ENCODE measurements at regions of chr17 and their contacts with region 1.

Region 1: DNA sequence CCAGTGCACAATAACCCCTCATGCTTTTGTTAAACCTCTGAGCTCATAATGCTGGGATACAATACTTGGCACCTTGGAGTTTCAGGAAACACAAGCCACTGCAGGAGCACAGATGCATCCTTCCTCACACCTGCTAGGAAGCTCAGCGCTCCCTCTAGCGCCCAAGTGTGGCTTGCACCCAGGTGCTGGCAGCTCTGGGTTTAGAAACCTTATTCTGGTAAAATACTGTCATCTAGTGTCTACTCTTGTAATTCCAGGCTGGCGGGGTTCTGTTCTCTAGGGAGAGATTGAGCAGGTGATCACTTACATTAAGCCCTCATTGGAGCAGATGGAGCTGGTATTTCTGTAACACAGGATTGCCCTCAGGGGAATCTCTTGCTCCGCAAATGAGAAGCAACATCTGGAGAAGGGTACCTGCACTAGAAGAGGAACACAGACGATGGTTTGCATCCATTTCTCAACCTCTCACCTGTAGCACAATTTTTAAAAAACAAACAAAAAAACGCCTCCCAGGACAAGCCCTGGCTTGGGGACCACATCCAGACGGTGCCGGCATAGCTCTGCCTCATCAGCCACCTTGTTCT is 1.5 kb downstream of the CCL1 start:
- DNase-seq: peak; percentile 82 to 94 (median 89)
- H3K4me3 ChIP-seq: no peak overlapping the region
- H3K4me3 Mint-ChIP-seq: no peak overlapping the region
- H3K27ac ChIP-seq: no peak overlapping the region
- H3K27ac Mint-ChIP-seq: peak overlapping the region in 1 of 7 donors; percentile 3
- H3K4me1 ChIP-seq: peaks cover 20 to 33% of the 10 kb centered on the region in 2 donors
- H3K4me1 Mint-ChIP-seq: peaks cover 24% of the 10 kb centered on the region
- H3K27me3 ChIP-seq: no peaks in the 10 kb centered on the region
- H3K27me3 Mint-ChIP-seq: peaks cover 0 to 2% (median 2%) of the 10 kb centered on the region in 3 donors
- CTCF ChIP-seq: peak; percentile 100

Region 2: DNA sequence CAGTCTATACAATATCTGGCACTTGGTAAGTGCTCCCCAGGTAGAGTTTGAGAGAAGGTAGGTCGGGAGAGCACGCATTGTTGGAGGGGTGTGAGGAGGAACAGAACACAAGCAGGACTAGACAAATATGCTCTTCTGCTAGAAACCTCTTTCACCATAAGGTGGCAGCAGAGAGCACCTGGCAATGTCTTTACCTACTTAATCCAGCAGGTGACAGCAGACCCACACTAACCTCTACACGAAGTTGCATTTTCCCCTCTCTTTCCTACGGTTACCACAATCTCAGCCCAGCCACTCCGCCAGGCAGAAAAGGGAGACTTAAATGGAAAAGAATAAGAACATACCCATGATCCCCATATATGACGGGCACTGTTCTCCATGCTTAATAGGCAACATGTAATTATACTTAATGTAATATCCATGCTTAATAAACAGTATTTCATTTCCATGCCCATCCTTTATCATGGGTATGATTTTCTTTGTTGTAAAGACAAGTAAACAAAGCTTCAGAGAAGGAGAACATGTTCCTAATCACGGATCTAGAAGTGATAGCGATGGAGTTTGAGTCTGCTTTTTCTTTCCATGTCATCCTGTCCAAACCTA is 161.5 kb before region 1 on chr17:
- intact Hi-C with region 1: loop called (anchors 1 kb)
- DNase-seq: peak; percentile 79 to 88 (median 87)
- H3K4me3 ChIP-seq: no peak overlapping the region
- H3K4me3 Mint-ChIP-seq: no peak overlapping the region
- H3K27ac ChIP-seq: peak overlapping the region in 1 of 2 donors; percentile 3
- H3K27ac Mint-ChIP-seq: peak overlapping the region in 4 of 7 donors; percentile 12 to 59 (median 36)
- H3K4me1 ChIP-seq: peaks cover 18 to 19% of the 10 kb centered on the region in 2 donors
- H3K4me1 Mint-ChIP-seq: peaks cover 23% of the 10 kb centered on the region
- H3K27me3 ChIP-seq: peaks cover 0 to 2% of the 10 kb centered on the region in 2 donors
- H3K27me3 Mint-ChIP-seq: peaks cover 0 to 11% (median 5%) of the 10 kb centered on the region in 3 donors
- CTCF ChIP-seq: peak; percentile 100

Region 3: GRCh38 chr17:34306466-34306865 is 55.1 kb before region 1 on chr17:
- intact Hi-C with region 1: loop called in 1 of 2 experiments (anchors 10 kb)
- DNase-seq: peak in 1 of 3 donors; percentile 63
- H3K4me3 ChIP-seq: peak overlapping the region in 1 of 3 experiments; percentile 34
- H3K4me3 Mint-ChIP-seq: no peak overlapping the region
- H3K27ac ChIP-seq: peak overlapping the region in 1 of 2 donors; percentile 77
- H3K27ac Mint-ChIP-seq: peak overlapping the region; percentile 80 to 94 (median 90)
- H3K4me1 ChIP-seq: peaks cover 49 to 54% of the 10 kb centered on the region in 2 donors
- H3K4me1 Mint-ChIP-seq: peaks cover 59% of the 10 kb centered on the region
- H3K27me3 ChIP-seq: no peaks in the 10 kb centered on the region
- H3K27me3 Mint-ChIP-seq: peaks cover 0 to 2% (median 0%) of the 10 kb centered on the region in 3 donors
- CTCF ChIP-seq: no peak

Region 4: GRCh38 chr17:34318474-34318873 is 43.1 kb before region 1 on chr17:
- intact Hi-C with region 1: loop called in 1 of 2 experiments (anchors 5 kb)
- DNase-seq: peak in 2 of 3 donors; percentile 42 to 56
- H3K4me3 ChIP-seq: no peak overlapping the region
- H3K4me3 Mint-ChIP-seq: no peak overlapping the region
- H3K27ac ChIP-seq: peak overlapping the region in 1 of 2 donors; percentile 16
- H3K27ac Mint-ChIP-seq: peak overlapping the region in 3 of 7 donors; percentile 3 to 51 (median 13)
- H3K4me1 ChIP-seq: peaks cover 36 to 38% of the 10 kb centered on the region in 2 donors
- H3K4me1 Mint-ChIP-seq: peaks cover 41% of the 10 kb centered on the region
- H3K27me3 ChIP-seq: no peaks in the 10 kb centered on the region
- H3K27me3 Mint-ChIP-seq: peaks cover 0 to 1% (median 0%) of the 10 kb centered on the region in 3 donors
- CTCF ChIP-seq: peak; percentile 65

Region 5: DNA sequence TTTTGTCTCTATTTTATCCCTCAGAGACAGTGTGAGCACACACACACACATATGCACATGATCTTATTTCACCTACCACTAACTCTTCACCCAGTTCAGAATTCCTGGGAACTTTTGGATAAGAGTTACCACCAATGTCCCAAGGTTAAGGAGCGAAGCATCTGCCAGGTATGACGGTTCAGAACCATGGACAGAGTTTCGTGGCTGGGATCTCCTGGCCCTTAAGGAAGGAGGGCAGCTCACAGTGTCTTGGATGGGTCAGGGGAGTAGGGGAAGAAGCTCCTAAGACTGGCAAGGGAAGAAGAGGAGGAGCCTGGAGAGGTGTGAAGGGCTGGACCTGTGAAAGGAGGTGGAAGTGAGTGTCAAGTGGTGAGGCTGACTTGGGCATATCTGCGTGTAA is 194.8 kb after region 1 on chr17:
- intact Hi-C with region 1: no loop called
- DNase-seq: no peak
- H3K4me3 ChIP-seq: no peak overlapping the region
- H3K4me3 Mint-ChIP-seq: no peak overlapping the region
- H3K27ac ChIP-seq: no peak overlapping the region
- H3K27ac Mint-ChIP-seq: no peak overlapping the region
- H3K4me1 ChIP-seq: no peaks in the 10 kb centered on the region
- H3K4me1 Mint-ChIP-seq: no peaks in the 10 kb centered on the region
- H3K27me3 ChIP-seq: peaks cover 0 to 4% of the 10 kb centered on the region in 2 donors
- H3K27me3 Mint-ChIP-seq: peaks cover 6 to 11% (median 7%) of the 10 kb centered on the region in 3 donors
- CTCF ChIP-seq: no peak